ENCODE measurements at regions of chr22 and their contacts with region 1.

Region 1: GRCh38 chr22:26364066-26365015 is 64.7 kb upstream of the ASPHD2 start:
- DNase-seq: peak; percentile 69
- H3K4me3 Mint-ChIP-seq: no peak overlapping the region
- H3K27ac Mint-ChIP-seq: no peak overlapping the region
- H3K4me1 Mint-ChIP-seq: peaks cover 6% of the 10 kb centered on the region
- H3K27me3 Mint-ChIP-seq: peaks cover 11% of the 10 kb centered on the region

Region 2: GRCh38 chr22:26273011-26273675 is 91.2 kb before region 1 on chr22:
- CTCF ChIA-PET with region 1: no interaction called
- DNase-seq: no peak
- H3K4me3 Mint-ChIP-seq: no peak overlapping the region
- H3K27ac Mint-ChIP-seq: no peak overlapping the region
- H3K4me1 Mint-ChIP-seq: no peaks in the 10 kb centered on the region
- H3K27me3 Mint-ChIP-seq: peaks cover 22% of the 10 kb centered on the region

Region 3: DNA sequence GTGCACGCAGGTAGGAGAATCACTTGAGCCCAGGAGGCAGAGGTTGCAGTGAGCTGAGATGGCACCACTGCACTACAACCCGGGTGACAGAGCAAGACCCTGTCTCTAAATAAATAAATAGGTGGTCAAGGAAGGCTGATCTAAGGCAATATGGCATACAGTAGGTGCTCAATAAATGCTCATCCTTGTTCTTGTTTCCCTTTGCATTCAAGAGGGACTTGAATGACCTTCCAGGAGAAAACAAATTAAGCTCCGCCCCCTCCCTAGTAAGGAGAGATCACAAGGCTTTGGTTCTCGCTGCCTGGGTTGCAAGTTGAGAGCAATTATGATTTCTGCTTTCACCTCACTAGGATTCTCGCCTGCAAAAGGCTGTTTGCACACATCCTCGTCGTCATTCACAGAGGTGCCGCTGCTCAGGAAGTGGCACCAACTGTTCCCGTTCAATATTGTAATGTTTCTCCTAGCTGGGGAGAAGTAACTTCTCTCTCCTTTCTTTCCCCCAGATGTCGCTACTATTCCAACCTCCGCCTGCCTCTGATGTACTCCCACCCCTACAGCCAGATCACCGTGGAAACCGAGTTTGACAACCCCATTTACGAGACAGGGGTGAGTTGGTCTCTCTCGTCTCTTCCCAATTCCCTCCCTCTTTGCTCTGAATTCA is 13.0 kb after region 1 on chr22:
- CTCF ChIA-PET with region 1: interaction called, 19 read pairs
- DNase-seq: no peak
- H3K4me3 Mint-ChIP-seq: no peak overlapping the region
- H3K27ac Mint-ChIP-seq: no peak overlapping the region
- H3K4me1 Mint-ChIP-seq: peaks cover 5% of the 10 kb centered on the region
- H3K27me3 Mint-ChIP-seq: peaks cover 64% of the 10 kb centered on the region

Region 4: GRCh38 chr22:26383968-26384576 is 19.7 kb after region 1 on chr22:
- CTCF ChIA-PET with region 1: interaction called, 19 read pairs
- DNase-seq: no peak
- H3K4me3 Mint-ChIP-seq: no peak overlapping the region
- H3K27ac Mint-ChIP-seq: no peak overlapping the region
- H3K4me1 Mint-ChIP-seq: no peaks in the 10 kb centered on the region
- H3K27me3 Mint-ChIP-seq: peaks cover 67% of the 10 kb centered on the region

Region 5: DNA sequence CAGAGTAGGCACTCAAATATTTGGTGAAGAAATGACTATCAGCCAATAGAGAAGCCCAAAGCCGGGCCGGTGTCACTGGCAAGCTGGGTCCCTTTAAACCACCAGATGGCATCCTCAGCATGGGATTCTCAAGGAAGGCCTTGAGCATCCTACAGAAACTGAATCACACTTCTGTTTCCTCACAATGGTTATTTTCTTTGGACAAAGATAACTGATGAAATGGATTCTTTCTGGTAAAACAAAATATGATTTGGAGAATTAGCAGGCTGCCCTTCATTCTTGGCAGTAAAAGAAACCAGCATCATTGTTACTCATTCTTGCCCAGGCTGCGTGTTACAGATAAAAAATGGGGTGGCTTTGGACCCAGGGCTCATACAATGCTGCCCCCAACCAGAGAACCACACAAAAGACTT is 34.4 kb after region 1 on chr22:
- CTCF ChIA-PET with region 1: interaction called, 12 read pairs
- DNase-seq: peak; percentile 77
- H3K4me3 Mint-ChIP-seq: no peak overlapping the region
- H3K27ac Mint-ChIP-seq: no peak overlapping the region
- H3K4me1 Mint-ChIP-seq: peaks cover 4% of the 10 kb centered on the region
- H3K27me3 Mint-ChIP-seq: peaks cover 29% of the 10 kb centered on the region

Measured in activated naive CD4-positive, alpha-beta T cell treated with anti-CD3 and anti-CD28 coated beads, Interleukin-2, amount 10 ng/mL, durations not matched to agents 7 days and 5 days (primary cell).